ENCODE measurements at regions of chr4 and their contacts with region 1.

Region 1: DNA sequence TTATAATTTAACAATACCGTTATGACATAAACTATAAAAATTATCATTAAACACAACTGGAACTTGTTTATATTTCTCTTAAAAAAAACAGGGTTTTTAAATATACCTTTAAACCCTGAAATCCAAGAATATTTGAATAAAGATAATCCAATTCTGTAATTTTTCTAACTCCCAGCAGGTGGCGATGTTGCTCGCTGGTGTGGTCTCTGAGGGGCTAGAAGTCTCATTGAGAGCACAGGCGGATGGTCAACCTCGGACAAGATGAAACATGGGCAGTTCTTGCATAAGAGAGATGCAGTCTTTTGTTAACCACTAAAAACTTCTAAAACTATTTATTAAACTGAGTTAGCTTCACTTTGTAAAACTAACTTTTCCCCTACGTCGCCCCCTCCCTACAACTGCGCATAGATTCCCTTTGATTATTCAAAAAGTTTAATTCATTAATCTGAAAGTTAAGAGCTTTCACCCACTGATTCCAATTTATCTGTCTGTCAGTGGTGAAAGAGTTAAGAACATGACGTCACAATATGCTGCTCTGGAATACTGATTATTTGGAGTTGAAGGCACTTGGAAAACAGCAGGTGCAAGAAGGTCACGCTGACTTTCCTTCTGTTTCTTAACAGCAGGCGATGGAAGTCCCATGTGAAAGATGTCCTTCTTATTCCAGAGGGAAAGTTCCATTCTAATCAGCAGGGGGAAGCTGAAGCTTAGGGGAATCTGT is 29.5 kb downstream of the DMP1 start:
- DNase-seq: peak in 1 of 3 donors; percentile 23
- ATAC-seq: peak; percentile 51 to 70 (median 62)
- H3K4me3 ChIP-seq: no peak overlapping the region
- H3K27ac ChIP-seq: no peak overlapping the region
- H3K4me1 ChIP-seq: no peaks in the 10 kb centered on the region
- H3K27me3 ChIP-seq: no peaks in the 10 kb centered on the region
- CTCF ChIP-seq: peak; percentile 65 to 77 (median 75)
- POLR2A ChIP-seq: no peak

Region 2: DNA sequence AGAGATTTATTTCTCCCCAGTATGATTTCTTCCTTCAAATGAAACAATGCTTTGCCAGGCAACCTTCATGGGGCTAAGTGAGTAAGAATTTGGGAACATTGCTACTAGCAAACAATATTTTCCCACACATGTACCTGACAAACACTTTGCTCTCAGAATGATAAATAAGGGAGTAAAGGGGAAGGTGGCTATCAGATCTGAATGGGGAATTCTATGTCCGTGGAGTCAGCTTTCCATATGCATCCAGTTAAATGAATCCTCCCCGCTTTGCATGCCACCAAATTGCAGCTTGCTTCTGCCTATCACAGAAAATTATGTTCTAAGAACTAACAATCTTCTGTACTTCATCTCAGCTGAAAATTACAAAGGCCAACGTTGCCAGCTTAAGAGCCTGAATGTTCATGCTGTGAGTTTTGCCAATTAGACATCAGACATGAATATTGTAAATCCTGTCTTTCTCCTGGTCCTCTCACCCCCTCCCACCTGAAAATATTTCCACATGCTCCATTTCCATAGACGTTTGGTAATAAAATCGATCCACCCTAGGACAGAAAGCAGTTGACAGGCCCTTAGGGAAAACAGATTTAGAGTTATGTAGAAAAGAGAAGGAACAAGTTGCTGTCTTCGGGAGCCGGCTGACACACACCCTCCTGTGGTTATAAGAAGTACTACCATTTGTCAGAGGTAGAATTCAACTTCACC is 159.4 kb after region 1 on chr4:
- intact Hi-C with region 1: loop called (anchors 5 to 10 kb)
- DNase-seq: peak in 1 of 3 donors; percentile 34
- ATAC-seq: peak; percentile 79 to 88 (median 84)
- H3K4me3 ChIP-seq: no peak overlapping the region
- H3K27ac ChIP-seq: no peak overlapping the region
- H3K4me1 ChIP-seq: no peaks in the 10 kb centered on the region
- H3K27me3 ChIP-seq: no peaks in the 10 kb centered on the region
- CTCF ChIP-seq: peak; percentile 60 to 75 (median 66)
- POLR2A ChIP-seq: no peak